Mammary epithelial cell (primary cell): ENCODE measurements at regions of chr12 and their contacts with region 1.

Region 1: GRCh38 chr12:109804820-109805761 is 28.1 kb downstream of the TRPV4 start:
- DNase-seq: peak; percentile 35
- H3K4me3 ChIP-seq: no peak overlapping the region
- H3K27ac ChIP-seq: no peak overlapping the region
- H3K4me1 ChIP-seq: no peaks in the 10 kb centered on the region
- H3K27me3 ChIP-seq: no peaks in the 10 kb centered on the region
- CTCF ChIP-seq: peak; percentile 97 to 98

Region 2: GRCh38 chr12:109844983-109845823 is 40.1 kb after region 1 on chr12:
- CTCF ChIA-PET with region 1: interaction called, 3 read pairs
- dilution Hi-C with region 1: no loop called
- in situ Hi-C with region 1: loop called in 1 of 2 experiments (anchors 5 kb)
- intact Hi-C with region 1: loop called (anchors 1 kb)
- DNase-seq: peak; percentile 83
- H3K4me3 ChIP-seq: peak overlapping the region in 1 of 3 experiments; percentile 28
- H3K27ac ChIP-seq: no peak overlapping the region
- H3K4me1 ChIP-seq: peaks cover 14% of the 10 kb centered on the region
- H3K27me3 ChIP-seq: no peaks in the 10 kb centered on the region
- CTCF ChIP-seq: peak; percentile 82 to 99

Region 3: DNA sequence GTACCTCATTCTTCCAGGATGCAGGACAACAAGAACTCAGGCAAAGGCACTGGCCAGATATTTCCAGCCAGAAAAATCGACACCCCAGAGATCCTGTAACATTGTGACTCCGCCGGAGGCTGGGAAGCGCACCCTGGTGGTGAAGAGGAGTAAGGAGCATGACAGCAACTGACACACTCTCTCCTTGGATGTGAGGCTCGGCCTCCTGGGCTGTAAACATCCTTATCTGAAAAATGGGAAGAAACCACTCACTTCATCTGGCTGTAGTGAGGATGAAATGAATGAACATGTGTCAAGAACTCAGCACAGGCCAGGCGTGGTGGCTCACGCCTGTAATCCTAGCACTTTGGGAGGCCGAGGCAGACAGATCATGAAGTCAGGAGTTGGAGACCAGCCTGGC is 122.5 kb after region 1 on chr12:
- CTCF ChIA-PET with region 1: no interaction called
- dilution Hi-C with region 1: no loop called
- in situ Hi-C with region 1: no loop called
- intact Hi-C with region 1: loop called (anchors 1 kb)
- DNase-seq: no peak
- H3K4me3 ChIP-seq: no peak overlapping the region
- H3K27ac ChIP-seq: no peak overlapping the region
- H3K4me1 ChIP-seq: no peaks in the 10 kb centered on the region
- H3K27me3 ChIP-seq: no peaks in the 10 kb centered on the region
- CTCF ChIP-seq: peak; percentile 79 to 84